ENCODE measurements at regions of chrX and their contacts with region 1.

Region 1: DNA sequence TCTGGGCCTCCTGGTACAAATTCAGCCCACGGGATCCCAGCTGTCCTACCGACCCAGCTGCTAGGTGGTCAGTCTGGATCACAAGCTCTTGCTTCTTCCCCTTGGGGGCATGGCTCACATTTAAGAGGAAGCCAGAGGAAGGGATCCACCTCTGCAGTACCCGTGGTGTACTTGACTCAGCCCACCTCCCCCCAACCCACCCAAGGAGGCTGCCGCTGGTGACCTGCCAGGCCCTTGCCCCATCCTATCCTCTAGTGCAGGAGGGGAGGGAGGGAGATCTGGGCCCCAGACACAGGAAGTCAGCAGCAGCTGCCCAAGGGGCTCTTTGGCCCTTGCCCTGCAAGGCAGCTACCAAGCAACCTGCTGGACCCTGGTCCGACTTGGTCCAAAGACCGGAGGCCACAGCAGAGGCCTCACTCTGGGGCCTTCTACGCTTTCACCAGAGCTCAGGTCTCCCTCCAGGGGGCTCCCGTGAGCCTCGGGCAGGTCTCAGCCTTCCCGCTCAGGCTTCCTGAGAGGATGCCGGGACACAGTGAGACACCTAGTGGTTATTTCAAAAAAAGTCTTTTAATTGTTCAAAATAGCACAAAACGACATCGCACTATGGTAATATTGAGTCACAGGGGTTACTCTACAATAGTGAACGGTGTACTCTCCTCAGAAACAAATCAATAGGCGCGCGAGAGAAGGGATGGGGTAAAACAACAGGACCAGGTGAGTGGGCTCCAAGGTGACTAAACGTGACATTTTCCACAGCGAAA is 2.7 kb upstream of the RENBP start:
- DNase-seq: peak; percentile 63
- ATAC-seq: peak; percentile 86
- H3K4me3 Mint-ChIP-seq: no peak overlapping the region
- H3K27ac Mint-ChIP-seq: peak overlapping the region; percentile 63
- H3K4me1 Mint-ChIP-seq: peaks cover 17% of the 10 kb centered on the region
- H3K27me3 Mint-ChIP-seq: no peaks in the 10 kb centered on the region
- CTCF ChIP-seq: no peak

Region 2: GRCh38 chrX:153032397-153033118 is 914.6 kb before region 1 on chrX:
- CTCF ChIA-PET with region 1: no interaction called
- POLR2A ChIA-PET with region 1: no interaction called
- intact Hi-C with region 1: loop called (anchors 2 kb)
- DNase-seq: peak; percentile 70
- ATAC-seq: peak; percentile 87
- H3K4me3 Mint-ChIP-seq: peak overlapping the region; percentile 89
- H3K27ac Mint-ChIP-seq: peak overlapping the region; percentile 92
- H3K4me1 Mint-ChIP-seq: peaks cover 2% of the 10 kb centered on the region
- H3K27me3 Mint-ChIP-seq: no peaks in the 10 kb centered on the region
- CTCF ChIP-seq: no peak

Region 3: GRCh38 chrX:153662266-153662665 is 284.9 kb before region 1 on chrX:
- CTCF ChIA-PET with region 1: no interaction called
- POLR2A ChIA-PET with region 1: no interaction called
- intact Hi-C with region 1: no loop called
- DNase-seq: peak; percentile 44
- ATAC-seq: no peak
- H3K4me3 Mint-ChIP-seq: peak overlapping the region; percentile 55
- H3K27ac Mint-ChIP-seq: no peak overlapping the region
- H3K4me1 Mint-ChIP-seq: peaks cover 2% of the 10 kb centered on the region
- H3K27me3 Mint-ChIP-seq: peaks cover 11% of the 10 kb centered on the region
- CTCF ChIP-seq: no peak

Region 4: DNA sequence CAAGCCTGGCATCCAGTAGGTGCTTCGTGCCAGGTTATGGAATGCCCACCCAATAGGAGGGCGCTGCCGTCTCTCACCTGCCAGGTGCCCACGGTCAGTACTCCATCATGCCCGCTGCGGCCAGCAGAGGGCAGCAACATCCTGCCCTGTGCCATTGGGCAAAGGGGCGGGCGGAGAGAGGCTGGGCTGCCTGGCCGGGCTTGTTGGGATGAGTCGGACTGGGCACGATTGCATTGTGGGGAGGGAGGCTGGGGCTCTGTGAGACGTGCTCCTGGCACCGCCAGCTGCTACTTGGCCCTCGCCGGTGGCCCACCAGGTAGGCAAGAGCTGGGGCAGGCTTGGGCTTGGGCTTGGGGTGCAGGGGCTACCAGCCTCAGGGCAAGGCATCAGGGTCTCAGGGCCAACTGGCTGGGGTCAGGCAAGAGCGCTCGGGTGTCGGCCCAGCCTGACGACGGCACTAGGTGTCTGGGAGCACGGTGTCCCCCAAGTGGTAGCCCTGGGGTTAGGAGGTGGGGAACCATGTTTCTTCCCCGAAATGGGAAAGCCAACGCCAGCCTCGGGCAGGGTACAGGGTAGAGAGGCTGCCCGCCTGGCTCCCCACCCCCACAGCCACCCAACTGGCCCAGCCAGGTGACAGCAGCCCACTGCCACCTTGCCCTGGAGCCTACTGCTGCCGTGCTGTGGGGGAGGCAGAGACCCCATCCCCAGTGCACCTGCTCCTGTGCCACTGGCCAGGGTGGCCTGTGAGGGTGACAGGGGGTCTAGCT is 183.0 kb before region 1 on chrX and contains the start of gene PLXNB3:
- CTCF ChIA-PET with region 1: interaction called, 20 read pairs
- POLR2A ChIA-PET with region 1: interaction called, 3 read pairs
- intact Hi-C with region 1: loop called (anchors 1 kb)
- DNase-seq: peak; percentile 68
- ATAC-seq: peak; percentile 90
- H3K4me3 Mint-ChIP-seq: no peak within 1 kb of the TSS
- H3K27ac Mint-ChIP-seq: no peak within 1 kb of the TSS
- H3K4me1 Mint-ChIP-seq: peaks cover 12% of the 10 kb centered on the region
- H3K27me3 Mint-ChIP-seq: no peaks in the 10 kb centered on the region
- CTCF ChIP-seq: peak; percentile 34
- total RNA-seq, gene PLXNB3: not detected in 2 replicates

Region 5: DNA sequence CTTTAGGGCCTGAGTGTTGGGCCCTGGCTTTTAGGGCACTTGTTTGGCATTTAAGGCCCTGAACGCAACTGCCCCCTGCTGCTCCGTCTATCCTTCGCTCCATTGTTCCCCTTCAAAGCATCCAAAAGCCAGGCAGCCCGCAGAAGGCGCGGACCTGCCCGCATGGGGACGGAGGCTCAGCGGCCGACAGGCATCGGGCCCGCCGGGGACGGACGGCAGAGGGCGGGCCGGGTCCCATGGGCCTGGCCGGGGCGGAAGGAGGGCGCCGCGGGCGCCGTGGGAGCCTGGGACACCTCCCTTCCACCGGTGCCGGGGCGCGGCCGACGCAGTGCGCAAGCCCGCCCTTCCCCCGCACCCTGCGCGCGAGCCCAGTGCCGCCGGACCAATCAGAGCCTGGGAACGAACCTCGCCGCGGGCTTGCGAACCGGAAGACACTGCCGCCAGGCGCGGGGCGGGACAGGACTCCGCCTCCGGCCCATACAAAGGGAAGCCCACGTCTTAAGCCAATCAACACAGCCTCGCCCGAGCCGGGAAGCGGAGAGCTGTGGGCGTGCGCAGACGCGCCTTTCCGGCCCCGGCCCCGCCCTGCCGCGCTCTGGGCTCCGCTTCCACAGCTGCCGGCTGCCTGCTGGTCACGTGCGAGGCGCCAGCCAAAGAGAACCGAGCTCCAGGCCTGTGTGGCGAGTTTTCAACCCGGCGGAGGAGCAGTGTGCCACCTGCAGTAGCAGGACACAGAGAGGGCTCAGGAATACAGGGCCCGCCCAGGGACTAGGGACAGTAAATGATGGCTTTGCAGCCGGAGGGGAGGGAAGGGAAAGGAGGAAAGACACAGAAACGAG is 19.0 kb before region 1 on chrX:
- CTCF ChIA-PET with region 1: interaction called, 146 read pairs
- POLR2A ChIA-PET with region 1: interaction called, 305 read pairs
- intact Hi-C with region 1: loop called (anchors 1 kb)
- DNase-seq: peak; percentile 83
- ATAC-seq: peak; percentile 66
- H3K4me3 Mint-ChIP-seq: peak overlapping the region; percentile 87
- H3K27ac Mint-ChIP-seq: peak overlapping the region; percentile 96
- H3K4me1 Mint-ChIP-seq: peaks cover 46% of the 10 kb centered on the region
- H3K27me3 Mint-ChIP-seq: no peaks in the 10 kb centered on the region
- CTCF ChIP-seq: no peak

Region 6: GRCh38 chrX:154051201-154051810 is 104.1 kb after region 1 on chrX:
- CTCF ChIA-PET with region 1: interaction called, 4 read pairs
- POLR2A ChIA-PET with region 1: interaction called, 5 read pairs
- intact Hi-C with region 1: loop called (anchors 2 kb)
- DNase-seq: peak; percentile 24
- ATAC-seq: peak; percentile 73
- H3K4me3 Mint-ChIP-seq: no peak overlapping the region
- H3K27ac Mint-ChIP-seq: no peak overlapping the region
- H3K4me1 Mint-ChIP-seq: peaks cover 10% of the 10 kb centered on the region
- H3K27me3 Mint-ChIP-seq: no peaks in the 10 kb centered on the region
- CTCF ChIP-seq: no peak

Region 7: GRCh38 chrX:154717824-154718223 is 770.6 kb after region 1 on chrX:
- CTCF ChIA-PET with region 1: no interaction called
- POLR2A ChIA-PET with region 1: no interaction called
- intact Hi-C with region 1: no loop called
- DNase-seq: no peak
- ATAC-seq: no peak
- H3K4me3 Mint-ChIP-seq: peak overlapping the region; percentile 36
- H3K27ac Mint-ChIP-seq: peak overlapping the region; percentile 71
- H3K4me1 Mint-ChIP-seq: peaks cover 39% of the 10 kb centered on the region
- H3K27me3 Mint-ChIP-seq: no peaks in the 10 kb centered on the region
- CTCF ChIP-seq: no peak